ENCODE measurements at regions of chr1 and their contacts with region 1.

Region 1: GRCh38 chr1:211698161-211699026 is 23.0 kb upstream of the NEK2 start:
- DNase-seq: peak; percentile 92
- H3K4me3 Mint-ChIP-seq: peak overlapping the region; percentile 49
- H3K27ac Mint-ChIP-seq: no peak overlapping the region
- H3K4me1 Mint-ChIP-seq: peaks cover 14% of the 10 kb centered on the region
- H3K27me3 Mint-ChIP-seq: no peaks in the 10 kb centered on the region

Region 2: DNA sequence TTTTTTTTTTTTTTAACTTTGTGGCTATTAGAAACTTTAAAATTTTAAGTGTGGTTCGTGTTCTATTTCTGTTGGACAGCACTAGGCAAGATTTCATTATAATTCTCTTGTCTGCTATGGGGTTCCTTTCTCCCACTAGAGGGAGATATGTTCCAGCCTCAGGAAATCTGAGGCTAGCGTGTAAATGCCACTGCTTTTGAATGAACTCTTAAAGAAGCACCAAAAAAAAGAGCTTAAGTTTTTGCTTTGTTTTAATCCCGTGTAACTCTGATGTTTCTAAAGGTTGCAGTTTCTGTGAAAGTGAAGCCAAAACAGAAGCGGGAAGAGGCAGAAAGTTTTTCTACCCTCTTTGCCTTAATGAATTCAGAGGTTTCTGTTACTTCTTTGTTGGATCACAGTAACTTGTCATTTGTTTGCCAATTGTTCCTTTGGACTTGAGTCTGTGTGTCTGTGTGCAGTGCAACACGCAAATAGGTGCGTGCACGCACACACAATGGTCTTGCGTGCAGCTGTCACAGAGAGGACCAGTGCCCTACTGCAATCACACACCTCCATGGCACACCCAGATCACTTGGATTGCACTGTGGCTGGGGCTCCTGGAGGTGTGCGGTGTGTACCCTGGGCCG is 1337.4 kb before region 1 on chr1:
- CTCF ChIA-PET with region 1: no interaction called
- intact Hi-C with region 1: no loop called
- DNase-seq: no peak
- H3K4me3 Mint-ChIP-seq: no peak overlapping the region
- H3K27ac Mint-ChIP-seq: peak overlapping the region; percentile 13
- H3K4me1 Mint-ChIP-seq: peaks cover 10% of the 10 kb centered on the region
- H3K27me3 Mint-ChIP-seq: no peaks in the 10 kb centered on the region

Region 3: DNA sequence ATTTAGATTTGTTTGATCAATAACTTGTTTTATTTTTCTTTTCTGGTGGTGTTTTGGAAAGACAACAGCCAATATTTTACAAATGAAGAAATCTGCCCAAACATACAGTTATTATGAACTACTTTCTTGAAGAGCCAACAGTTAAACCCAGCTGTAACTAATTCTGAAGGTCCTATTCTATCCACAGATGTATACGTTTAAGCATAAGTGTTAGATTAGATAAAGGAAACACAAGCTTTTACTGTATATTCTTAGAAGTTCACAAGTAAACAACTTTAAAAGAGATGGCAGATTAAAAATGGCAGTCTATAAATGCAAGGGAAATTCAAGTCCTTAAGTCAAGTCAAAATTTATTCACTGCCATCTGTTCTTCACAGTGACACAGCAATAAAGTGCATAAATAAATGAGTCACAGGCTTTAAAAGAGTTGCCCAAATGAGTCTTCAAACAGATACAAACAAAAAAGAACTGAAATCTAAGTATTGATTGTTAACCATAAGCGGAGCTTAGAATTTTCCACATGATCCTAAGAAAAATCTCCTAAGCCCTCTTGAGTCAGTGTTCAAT is 514.6 kb before region 1 on chr1:
- CTCF ChIA-PET with region 1: no interaction called
- intact Hi-C with region 1: no loop called
- DNase-seq: no peak
- H3K4me3 Mint-ChIP-seq: no peak overlapping the region
- H3K27ac Mint-ChIP-seq: no peak overlapping the region
- H3K4me1 Mint-ChIP-seq: no peaks in the 10 kb centered on the region
- H3K27me3 Mint-ChIP-seq: peaks cover under 1% of the 10 kb centered on the region

Region 4: DNA sequence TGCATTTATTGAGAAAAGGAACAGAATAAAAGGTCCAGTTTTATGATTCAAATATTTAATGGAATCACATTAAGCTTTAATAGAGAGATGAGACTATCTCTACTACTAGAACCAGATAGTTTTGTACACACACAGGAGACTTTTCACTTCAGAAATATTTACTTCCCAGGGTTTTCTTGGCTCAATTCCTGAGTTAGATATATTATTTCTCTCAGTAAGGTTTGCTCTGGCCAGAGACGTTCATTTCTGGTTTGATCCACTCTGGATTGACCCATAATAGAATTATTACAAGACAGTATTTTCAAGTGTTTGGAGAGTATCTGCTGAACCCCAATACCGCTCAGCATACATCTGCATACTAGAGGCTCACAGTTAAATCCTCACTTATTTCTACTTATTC is 440.6 kb before region 1 on chr1:
- CTCF ChIA-PET with region 1: no interaction called
- intact Hi-C with region 1: no loop called
- DNase-seq: no peak
- H3K4me3 Mint-ChIP-seq: peak overlapping the region; percentile 90
- H3K27ac Mint-ChIP-seq: peak overlapping the region; percentile 96
- H3K4me1 Mint-ChIP-seq: peaks cover 16% of the 10 kb centered on the region
- H3K27me3 Mint-ChIP-seq: no peaks in the 10 kb centered on the region

Region 5: GRCh38 chr1:211680752-211681327 is 17.6 kb before region 1 on chr1:
- CTCF ChIA-PET with region 1: interaction called, 56 read pairs
- intact Hi-C with region 1: loop called (anchors 1 kb)
- DNase-seq: peak; percentile 80
- H3K4me3 Mint-ChIP-seq: no peak overlapping the region
- H3K27ac Mint-ChIP-seq: peak overlapping the region; percentile 24
- H3K4me1 Mint-ChIP-seq: peaks cover 7% of the 10 kb centered on the region
- H3K27me3 Mint-ChIP-seq: no peaks in the 10 kb centered on the region

Region 6: DNA sequence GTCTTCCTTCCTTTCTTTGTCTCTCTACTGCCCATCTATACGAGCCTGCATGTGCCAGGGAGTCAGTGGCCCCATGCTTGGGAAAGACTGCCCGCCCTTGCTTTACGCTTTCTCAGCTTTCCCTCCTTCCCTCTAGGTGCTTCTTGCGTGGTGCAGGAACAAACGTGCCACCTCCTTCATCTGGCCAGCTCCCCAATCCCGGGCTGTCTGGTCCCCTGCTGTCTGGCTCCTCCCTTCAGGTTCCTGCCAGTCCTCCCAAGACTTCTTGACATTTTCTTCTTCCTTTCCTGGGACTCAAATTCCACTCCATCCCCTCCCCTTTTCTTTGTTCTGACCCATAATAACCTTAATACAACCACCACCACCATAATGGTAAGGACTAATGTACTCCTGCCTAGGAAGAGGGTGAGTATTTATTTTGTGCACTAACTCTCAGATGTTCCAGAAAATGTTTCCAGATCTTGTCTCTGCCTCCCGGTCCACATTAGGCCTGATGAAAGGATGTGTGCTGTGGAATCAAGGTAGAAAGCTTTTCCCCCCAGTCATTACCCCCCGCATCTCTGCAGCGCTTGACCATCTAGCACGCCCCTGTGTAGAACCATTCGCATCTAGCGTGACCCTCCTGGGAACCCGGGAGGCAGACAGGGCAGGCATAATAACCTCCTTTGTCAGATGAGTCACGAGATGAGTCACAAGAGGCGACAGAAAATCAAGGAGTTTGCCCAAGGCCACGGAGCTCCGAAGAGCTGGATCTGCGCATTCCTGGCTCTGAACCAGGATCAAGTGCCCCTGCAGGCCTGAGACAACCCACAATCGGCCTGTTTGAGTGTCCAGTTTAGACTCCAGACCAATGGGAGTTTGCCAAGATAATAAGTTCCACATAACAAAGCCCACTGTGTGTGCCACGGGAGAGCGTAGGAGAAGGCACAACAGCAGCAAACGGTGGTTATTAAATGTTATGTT is 37.1 kb after region 1 on chr1:
- CTCF ChIA-PET with region 1: interaction called, 10 read pairs
- intact Hi-C with region 1: loop called (anchors 5 kb)
- DNase-seq: no peak
- H3K4me3 Mint-ChIP-seq: no peak overlapping the region
- H3K27ac Mint-ChIP-seq: no peak overlapping the region
- H3K4me1 Mint-ChIP-seq: peaks cover 29% of the 10 kb centered on the region
- H3K27me3 Mint-ChIP-seq: no peaks in the 10 kb centered on the region

Region 7: GRCh38 chr1:211752951-211753486 is 54.6 kb after region 1 on chr1:
- CTCF ChIA-PET with region 1: interaction called, 10 read pairs
- intact Hi-C with region 1: no loop called
- DNase-seq: no peak
- H3K4me3 Mint-ChIP-seq: no peak overlapping the region
- H3K27ac Mint-ChIP-seq: no peak overlapping the region
- H3K4me1 Mint-ChIP-seq: no peaks in the 10 kb centered on the region
- H3K27me3 Mint-ChIP-seq: no peaks in the 10 kb centered on the region

Region 8: GRCh38 chr1:211830330-211831142 is 132.1 kb after region 1 on chr1 and contains the start of gene LPGAT1:
- CTCF ChIA-PET with region 1: interaction called, 26 read pairs
- intact Hi-C with region 1: loop called (anchors 1 kb)
- DNase-seq: peak; percentile 75
- H3K4me3 Mint-ChIP-seq: peak within 1 kb of the TSS; percentile 82
- H3K27ac Mint-ChIP-seq: peak within 1 kb of the TSS; percentile 75
- H3K4me1 Mint-ChIP-seq: peaks cover 47% of the 10 kb centered on the region
- H3K27me3 Mint-ChIP-seq: no peaks in the 10 kb centered on the region
- total RNA-seq, gene LPGAT1: 18.6 to 21.7 TPM

Region 9: DNA sequence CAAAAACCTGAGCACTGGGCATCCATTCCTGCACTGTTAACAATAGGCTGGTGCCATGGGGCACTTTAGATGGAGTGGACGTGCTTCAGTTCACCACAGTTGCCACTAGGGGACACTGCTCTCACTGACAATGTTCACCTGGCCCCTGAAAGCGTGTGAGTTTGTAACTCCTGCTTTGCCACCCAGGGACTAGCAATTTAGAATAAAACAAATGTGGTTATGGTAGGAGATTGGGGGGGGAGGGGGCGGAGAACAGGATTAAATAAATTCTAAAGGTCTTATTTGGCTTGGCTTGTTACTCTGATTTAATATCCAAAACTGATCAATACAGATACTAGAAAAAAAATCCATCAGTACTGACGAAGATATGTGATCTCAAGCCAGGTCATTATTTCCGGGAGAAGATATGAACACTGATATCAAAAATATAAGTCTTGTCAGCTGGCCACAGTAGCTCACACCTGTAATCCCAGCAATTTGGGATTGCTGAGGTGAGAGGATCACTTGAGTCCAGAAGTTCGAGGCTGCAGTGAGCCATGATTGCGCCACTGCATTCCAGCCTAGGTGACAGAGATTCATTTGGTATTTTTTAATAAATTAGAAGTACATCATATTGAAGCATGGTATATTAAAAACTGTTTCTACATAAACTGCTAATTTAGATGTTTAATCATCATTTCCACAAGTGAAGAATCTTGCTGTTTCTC is 313.8 kb after region 1 on chr1:
- CTCF ChIA-PET with region 1: interaction called, 6 read pairs
- intact Hi-C with region 1: loop called (anchors 1 kb)
- DNase-seq: peak; percentile 84
- H3K4me3 Mint-ChIP-seq: no peak overlapping the region
- H3K27ac Mint-ChIP-seq: no peak overlapping the region
- H3K4me1 Mint-ChIP-seq: no peaks in the 10 kb centered on the region
- H3K27me3 Mint-ChIP-seq: no peaks in the 10 kb centered on the region

Measured in activated naive CD4-positive, alpha-beta T cell treated with anti-CD3 and anti-CD28 coated beads for 36 hours (primary cell).